Activated CD8-positive, alpha-beta T cell treated with anti-CD3 and anti-CD28 coated beads for 36 hours (primary cell): ENCODE measurements at regions of chr16 and their contacts with region 1.

Region 1: DNA sequence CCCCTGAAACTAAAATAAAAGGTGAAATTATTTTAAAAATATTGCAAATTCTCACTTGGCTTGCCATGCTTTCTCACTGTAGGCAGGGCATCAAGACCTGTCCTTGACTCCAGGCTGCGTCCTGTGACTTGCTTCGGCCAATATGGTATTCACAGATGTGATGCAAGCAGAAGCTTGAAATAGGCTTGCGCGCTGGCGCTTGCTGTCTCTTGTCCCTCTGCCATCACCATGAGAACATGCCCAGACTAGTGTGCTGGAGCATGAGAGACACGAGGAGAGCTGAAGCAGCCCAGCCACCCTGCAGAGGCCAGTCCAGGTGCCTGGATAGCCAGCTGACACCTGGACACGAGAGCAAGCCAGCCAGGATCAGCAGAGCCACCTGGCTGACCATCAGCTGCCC is 21.8 kb upstream of the ZKSCAN2 start:
- DNase-seq: no peak
- ATAC-seq: no peak
- H3K4me3 Mint-ChIP-seq: no peak overlapping the region
- H3K27ac Mint-ChIP-seq: no peak overlapping the region
- H3K4me1 Mint-ChIP-seq: no peaks in the 10 kb centered on the region
- H3K27me3 Mint-ChIP-seq: no peaks in the 10 kb centered on the region
- CTCF ChIP-seq: no peak

Region 2: DNA sequence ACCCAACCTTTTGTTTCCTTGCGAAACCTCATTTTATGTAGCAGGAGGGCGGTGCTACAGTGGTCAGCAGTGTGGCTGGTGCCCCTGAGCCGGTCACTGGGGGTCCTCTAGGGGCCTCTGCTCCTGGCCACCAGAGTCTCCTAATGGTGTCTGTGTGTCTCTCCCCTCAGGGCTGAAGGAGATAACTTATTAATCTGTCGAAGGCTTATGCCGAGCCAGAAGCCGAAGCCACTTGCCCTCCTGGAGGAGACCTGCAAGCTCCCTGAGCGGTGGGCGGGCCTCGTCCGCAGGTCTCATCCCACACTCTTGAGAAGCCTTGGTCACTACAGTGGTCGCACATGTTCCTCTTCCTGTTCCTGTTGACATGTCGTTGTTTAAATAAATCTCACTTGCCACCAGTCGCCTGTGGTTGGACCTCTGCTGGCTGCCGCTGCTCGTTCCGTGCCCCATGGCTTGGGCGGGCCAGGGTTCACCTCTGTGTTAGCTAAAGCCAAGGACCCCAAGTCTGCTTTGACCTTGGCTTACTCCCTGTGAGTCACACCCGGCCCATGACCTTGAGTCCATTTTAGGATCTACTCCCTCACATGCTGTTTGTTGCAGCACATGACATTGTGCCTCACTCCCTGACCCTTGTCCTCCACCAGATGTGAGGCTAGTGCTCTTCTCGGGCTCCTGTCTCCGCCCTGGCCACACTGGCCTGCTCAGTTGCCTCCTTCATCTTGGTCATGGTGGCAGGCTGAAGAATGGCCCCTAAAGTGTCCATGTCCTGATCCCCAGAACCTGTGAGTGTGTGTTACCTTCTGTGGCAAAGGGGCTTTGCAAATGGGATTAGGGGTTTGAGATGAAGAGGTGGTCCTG is 101.4 kb before region 1 on chr16:
- CTCF ChIA-PET with region 1: no interaction called
- POLR2A ChIA-PET with region 1: no interaction called
- intact Hi-C with region 1: no loop called
- DNase-seq: no peak
- ATAC-seq: no peak
- H3K4me3 Mint-ChIP-seq: no peak overlapping the region
- H3K27ac Mint-ChIP-seq: no peak overlapping the region
- H3K4me1 Mint-ChIP-seq: peaks cover 6% of the 10 kb centered on the region
- H3K27me3 Mint-ChIP-seq: no peaks in the 10 kb centered on the region
- CTCF ChIP-seq: no peak

Region 3: GRCh38 chr16:25257956-25258823 is 21.3 kb before region 1 on chr16:
- CTCF ChIA-PET with region 1: interaction called, 17 read pairs
- POLR2A ChIA-PET with region 1: interaction called, 5 read pairs
- intact Hi-C with region 1: no loop called
- DNase-seq: peak; percentile 84
- ATAC-seq: peak; percentile 52
- H3K4me3 Mint-ChIP-seq: peak overlapping the region; percentile 99
- H3K27ac Mint-ChIP-seq: peak overlapping the region; percentile 94
- H3K4me1 Mint-ChIP-seq: peaks cover 53% of the 10 kb centered on the region
- H3K27me3 Mint-ChIP-seq: no peaks in the 10 kb centered on the region
- CTCF ChIP-seq: no peak

Region 4: GRCh38 chr16:25265968-25266367 is 13.5 kb before region 1 on chr16:
- CTCF ChIA-PET with region 1: interaction called, 17 read pairs
- POLR2A ChIA-PET with region 1: interaction called, 4 read pairs
- intact Hi-C with region 1: no loop called
- DNase-seq: no peak
- ATAC-seq: no peak
- H3K4me3 Mint-ChIP-seq: no peak overlapping the region
- H3K27ac Mint-ChIP-seq: no peak overlapping the region
- H3K4me1 Mint-ChIP-seq: peaks cover 14% of the 10 kb centered on the region
- H3K27me3 Mint-ChIP-seq: no peaks in the 10 kb centered on the region
- CTCF ChIP-seq: no peak